PC-9 (cell line): ENCODE measurements at regions of chr5 and their contacts with region 1.

Region 1: DNA sequence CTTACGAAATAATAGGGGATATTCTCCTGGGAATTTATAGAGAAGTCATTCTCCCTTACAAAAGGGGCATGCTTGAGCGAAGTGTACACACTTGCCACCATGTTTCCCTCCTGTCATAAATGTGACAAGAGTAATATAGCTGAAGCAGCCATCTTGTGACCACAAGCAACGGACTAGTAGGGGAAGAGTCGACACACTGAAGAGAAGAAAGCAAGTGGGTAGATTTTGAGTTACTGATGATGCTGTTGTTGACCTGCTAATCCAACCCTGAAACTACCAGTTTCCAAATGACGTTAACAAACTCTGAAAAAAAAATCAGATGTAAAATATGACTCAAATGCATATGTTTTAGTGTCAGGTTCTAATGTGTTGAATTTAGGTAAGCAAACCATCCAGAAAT is 350.5 kb downstream of the CDH10 start:
- DNase-seq: no peak
- H3K4me3 ChIP-seq: no peak overlapping the region
- H3K27ac ChIP-seq: no peak overlapping the region
- H3K4me1 ChIP-seq: no peaks in the 10 kb centered on the region
- H3K27me3 ChIP-seq: no peaks in the 10 kb centered on the region
- CTCF ChIP-seq: no peak

Region 2: DNA sequence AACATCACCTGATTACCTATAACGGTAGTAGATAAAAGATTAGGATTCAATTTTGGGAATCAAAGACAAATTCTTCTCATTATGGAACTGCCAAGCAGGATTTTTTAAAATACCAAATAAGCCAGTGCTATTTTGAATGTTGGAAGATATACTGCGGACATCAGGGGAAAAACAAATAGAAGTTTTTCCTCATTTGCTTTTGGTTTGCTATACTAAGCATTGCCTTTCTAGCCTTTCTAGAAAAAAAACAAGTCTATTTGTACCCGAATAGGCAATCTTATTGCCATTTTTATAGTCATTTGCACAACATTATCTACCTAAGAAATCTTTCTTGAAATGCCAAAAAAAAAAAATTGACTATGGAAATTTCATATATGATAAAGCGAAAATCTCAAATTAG is 29.0 kb before region 1 on chr5:
- CTCF ChIA-PET with region 1: interaction called, 16 read pairs
- POLR2A ChIA-PET with region 1: no interaction called
- intact Hi-C with region 1: no loop called
- DNase-seq: no peak
- H3K4me3 ChIP-seq: no peak overlapping the region
- H3K27ac ChIP-seq: no peak overlapping the region
- H3K4me1 ChIP-seq: no peaks in the 10 kb centered on the region
- H3K27me3 ChIP-seq: no peaks in the 10 kb centered on the region
- CTCF ChIP-seq: no peak